Activated T-helper 1 cell treated with anti-CD3 and anti-CD28 coated beads, Interleukin-12 subunit alpha, Interleukin-12 subunit beta, Interleukin-2, Interleukin-4 antibody, amounts not matched to agents 30 ng/mL and 10 ng/mL and 1 ng/mL, durations not matched to agents 14 hours and 24 hours and 36 hours (primary cell): ENCODE measurements at regions of chr7 and their contacts with region 1.

Region 1: DNA sequence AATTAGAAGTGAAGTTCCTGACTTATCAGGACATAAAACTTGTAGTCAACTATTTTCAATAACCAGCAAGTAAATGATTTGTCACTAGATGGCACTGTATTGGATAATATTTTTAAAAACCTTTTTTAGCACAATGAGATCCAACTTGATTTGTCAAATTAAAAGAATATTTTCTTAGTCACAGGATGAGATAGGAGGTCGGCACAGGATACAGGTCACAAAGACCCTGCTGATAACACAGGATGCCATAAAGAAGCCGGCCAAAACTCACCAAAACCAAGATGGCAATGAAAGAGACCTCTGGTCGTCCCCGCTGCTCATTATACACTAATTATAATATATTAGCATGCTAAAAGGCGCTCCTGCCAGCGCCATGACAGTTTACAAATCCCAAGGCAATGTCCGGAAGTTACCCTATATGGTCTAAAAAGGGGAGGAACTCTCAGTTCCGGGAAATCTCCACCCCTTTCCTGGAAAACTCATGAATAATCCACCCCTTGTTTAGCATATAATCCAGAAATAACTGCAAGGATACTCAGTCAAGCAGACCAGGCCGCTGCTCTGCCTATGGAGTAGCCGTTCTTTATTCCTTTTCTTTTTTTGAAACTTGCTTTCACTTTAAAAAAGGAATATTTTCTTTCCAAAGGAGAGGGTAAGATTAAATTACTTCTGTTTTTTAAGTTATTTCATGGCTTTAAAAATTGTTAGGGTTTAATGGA is 255.7 kb upstream of the MKLN1 start:
- DNase-seq: no peak
- H3K4me3 Mint-ChIP-seq: no peak overlapping the region
- H3K27ac Mint-ChIP-seq: no peak overlapping the region
- H3K4me1 Mint-ChIP-seq: peaks cover 60% of the 10 kb centered on the region
- H3K27me3 Mint-ChIP-seq: no peaks in the 10 kb centered on the region

Region 2: DNA sequence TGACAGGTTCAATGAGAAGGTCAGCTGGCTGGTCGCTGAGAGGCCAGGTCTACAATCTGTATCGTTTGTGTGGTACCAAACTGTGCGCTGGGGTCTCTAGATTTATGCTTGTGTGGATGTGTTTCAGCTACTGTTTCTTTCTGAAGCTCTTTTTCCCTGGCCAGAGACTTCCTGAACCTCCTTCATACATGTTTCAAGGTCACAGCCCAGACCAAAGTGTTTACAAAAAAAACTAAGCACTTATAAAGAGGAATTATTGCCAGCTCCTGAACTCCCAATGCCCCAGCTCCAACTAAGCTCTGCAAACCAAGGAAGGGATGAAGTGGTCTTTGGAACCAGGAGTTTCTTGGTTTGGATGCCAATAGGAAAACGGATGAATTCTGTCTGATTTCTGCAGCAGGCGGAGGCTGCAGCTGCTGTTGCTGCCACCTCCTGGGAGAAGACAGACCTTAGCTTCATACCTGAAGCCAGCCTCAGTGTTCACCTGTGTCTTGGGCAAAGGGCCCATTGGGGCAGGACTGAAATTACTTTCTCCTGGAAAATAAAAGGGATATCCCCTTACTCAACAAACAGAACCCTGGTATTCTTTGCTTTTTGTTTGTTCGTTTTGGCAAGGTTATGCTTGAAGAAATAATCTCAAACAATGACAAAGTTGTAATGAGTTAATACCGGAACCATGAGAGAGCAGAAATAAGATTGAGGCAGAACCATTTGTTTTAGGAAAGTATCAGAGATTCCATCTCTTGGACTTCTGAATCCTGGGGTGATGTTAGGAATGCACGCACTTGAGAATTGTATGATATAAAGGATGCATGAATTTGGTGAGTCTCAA is 231.1 kb after region 1 on chr7:
- intact Hi-C with region 1: loop called (anchors 1 kb)
- DNase-seq: no peak
- H3K4me3 Mint-ChIP-seq: no peak overlapping the region
- H3K27ac Mint-ChIP-seq: no peak overlapping the region
- H3K4me1 Mint-ChIP-seq: peaks cover 6% of the 10 kb centered on the region
- H3K27me3 Mint-ChIP-seq: peaks cover 9% of the 10 kb centered on the region

Region 3: GRCh38 chr7:131424219-131424822 is 352.4 kb after region 1 on chr7:
- intact Hi-C with region 1: loop called (anchors 1 kb)
- DNase-seq: no peak
- H3K4me3 Mint-ChIP-seq: no peak overlapping the region
- H3K27ac Mint-ChIP-seq: no peak overlapping the region
- H3K4me1 Mint-ChIP-seq: peaks cover 9% of the 10 kb centered on the region
- H3K27me3 Mint-ChIP-seq: no peaks in the 10 kb centered on the region

Region 4: GRCh38 chr7:131513245-131514061 is 441.5 kb after region 1 on chr7:
- intact Hi-C with region 1: loop called (anchors 1 kb)
- DNase-seq: peak; percentile 71
- H3K4me3 Mint-ChIP-seq: no peak overlapping the region
- H3K27ac Mint-ChIP-seq: peak overlapping the region; percentile 25
- H3K4me1 Mint-ChIP-seq: peaks cover 23% of the 10 kb centered on the region
- H3K27me3 Mint-ChIP-seq: peaks cover 12% of the 10 kb centered on the region

Region 5: GRCh38 chr7:132160611-132161532 is 1088.9 kb after region 1 on chr7:
- intact Hi-C with region 1: no loop called
- DNase-seq: no peak
- H3K4me3 Mint-ChIP-seq: no peak overlapping the region
- H3K27ac Mint-ChIP-seq: no peak overlapping the region
- H3K4me1 Mint-ChIP-seq: no peaks in the 10 kb centered on the region
- H3K27me3 Mint-ChIP-seq: peaks cover 8% of the 10 kb centered on the region